CD4-positive, alpha-beta memory T cell (primary cell): ENCODE measurements at regions of chr9 and their contacts with region 1.

Region 1: DNA sequence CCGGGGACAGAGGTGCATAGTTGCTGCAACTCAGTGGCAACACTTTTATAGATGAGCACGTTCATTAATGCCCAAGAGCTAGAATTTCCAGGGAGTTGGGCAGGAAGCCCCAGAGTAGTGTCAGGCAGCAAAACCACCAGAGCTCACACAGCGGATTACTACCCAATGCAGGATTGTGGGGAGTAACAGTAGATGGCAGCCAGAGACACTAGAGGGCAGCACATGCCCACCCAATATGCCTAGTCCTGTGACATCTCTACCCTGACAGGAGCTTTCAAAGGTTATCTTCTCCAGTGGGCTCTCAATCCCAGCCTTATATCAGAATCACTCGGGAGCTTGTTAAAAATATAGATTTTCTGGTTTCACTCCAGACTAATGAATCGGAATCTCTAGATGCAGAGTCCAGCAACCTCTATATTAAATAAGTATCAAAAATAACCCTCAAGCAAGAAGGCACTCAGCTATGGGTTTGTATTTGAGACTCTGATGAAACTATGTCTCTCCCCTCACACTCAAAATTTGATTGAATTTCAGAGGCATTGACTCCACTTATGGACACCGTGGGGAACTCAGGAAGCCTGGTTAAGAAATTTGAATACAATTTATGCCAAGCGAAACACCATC is 58.4 kb upstream of the PHF24 start:
- DNase-seq: peak; percentile 73 to 78 (median 77)
- H3K4me3 ChIP-seq: no peak overlapping the region
- H3K4me3 Mint-ChIP-seq: no peak overlapping the region
- H3K27ac ChIP-seq: no peak overlapping the region
- H3K27ac Mint-ChIP-seq: no peak overlapping the region
- H3K4me1 ChIP-seq: no peaks in the 10 kb centered on the region
- H3K4me1 Mint-ChIP-seq: no peaks in the 10 kb centered on the region
- H3K27me3 ChIP-seq: no peaks in the 10 kb centered on the region
- H3K27me3 Mint-ChIP-seq: peaks cover 29 to 30% of the 10 kb centered on the region in 2 donors

Region 2: DNA sequence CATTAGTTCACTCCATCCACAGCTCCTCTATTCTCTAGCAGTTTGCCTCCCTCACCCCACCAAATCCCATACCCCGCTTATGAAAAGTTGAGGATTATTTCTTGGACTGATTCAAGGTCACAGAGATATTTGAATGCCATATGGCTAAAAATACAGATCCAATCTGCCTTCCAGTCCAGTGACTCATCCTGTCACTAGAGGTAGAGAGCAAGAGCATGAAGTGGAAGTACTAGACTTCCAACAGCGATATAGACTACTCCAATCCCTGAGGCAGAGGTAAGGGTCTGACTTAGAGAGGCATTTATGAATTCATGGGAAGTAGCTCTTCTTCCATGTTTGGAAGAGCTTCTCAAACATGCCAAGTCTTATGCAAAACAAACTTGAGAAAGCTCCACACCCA is 117.3 kb before region 1 on chr9:
- CTCF ChIA-PET with region 1: no interaction called
- POLR2A ChIA-PET with region 1: no interaction called
- intact Hi-C with region 1: no loop called
- DNase-seq: no peak
- H3K4me3 ChIP-seq: no peak overlapping the region
- H3K4me3 Mint-ChIP-seq: no peak overlapping the region
- H3K27ac ChIP-seq: no peak overlapping the region
- H3K27ac Mint-ChIP-seq: no peak overlapping the region
- H3K4me1 ChIP-seq: no peaks in the 10 kb centered on the region
- H3K4me1 Mint-ChIP-seq: no peaks in the 10 kb centered on the region
- H3K27me3 ChIP-seq: no peaks in the 10 kb centered on the region
- H3K27me3 Mint-ChIP-seq: peaks cover 13 to 16% of the 10 kb centered on the region in 2 donors

Region 3: DNA sequence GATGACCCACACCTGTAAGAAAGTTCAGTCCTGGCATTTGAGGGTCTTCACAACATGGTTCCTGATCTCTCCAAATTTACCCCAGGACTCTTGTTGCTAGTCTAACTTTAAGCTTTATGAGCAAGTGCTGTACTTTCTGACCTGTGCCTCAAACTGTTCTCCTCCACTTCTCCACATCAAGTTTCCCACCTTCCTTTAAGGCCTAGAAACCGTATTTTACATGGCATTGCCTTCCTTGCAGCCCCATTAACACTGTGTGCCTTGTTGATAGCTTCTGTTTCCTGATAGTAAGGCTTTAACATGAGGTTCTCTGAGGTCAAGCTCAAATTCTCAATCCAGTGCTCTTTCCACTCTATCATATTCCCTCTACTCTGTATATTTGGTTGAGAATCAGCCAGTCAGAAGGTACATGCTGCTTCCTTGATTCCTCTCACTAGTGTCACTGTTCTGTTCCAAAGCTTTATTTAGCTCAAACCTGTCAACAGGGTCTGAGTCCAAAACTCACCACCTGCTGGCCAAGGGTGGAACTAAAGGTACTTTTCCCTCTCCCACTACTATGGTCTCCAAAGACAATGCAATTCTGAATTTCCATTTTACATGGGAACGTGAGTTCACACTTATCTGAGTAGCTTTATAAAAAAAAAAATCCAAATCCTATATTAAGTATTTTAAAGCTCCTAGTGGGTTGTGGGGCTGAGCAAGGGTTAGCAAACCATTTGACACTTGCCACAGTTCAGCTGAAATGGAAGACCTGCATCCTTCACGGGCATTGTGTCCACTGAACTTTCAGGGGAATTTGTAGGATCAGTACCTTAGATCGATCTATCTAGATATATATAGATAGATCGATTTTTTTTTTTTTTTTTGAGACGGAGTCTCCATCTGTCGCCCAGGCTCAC is 151.7 kb after region 1 on chr9:
- CTCF ChIA-PET with region 1: interaction called, 43 read pairs
- POLR2A ChIA-PET with region 1: interaction called, 5 read pairs
- intact Hi-C with region 1: loop called (anchors 1 kb)
- DNase-seq: peak; percentile 28 to 51 (median 36)
- H3K4me3 ChIP-seq: no peak overlapping the region
- H3K4me3 Mint-ChIP-seq: no peak overlapping the region
- H3K27ac ChIP-seq: no peak overlapping the region
- H3K27ac Mint-ChIP-seq: no peak overlapping the region
- H3K4me1 ChIP-seq: no peaks in the 10 kb centered on the region
- H3K4me1 Mint-ChIP-seq: peaks cover 0 to 13% (median 5%) of the 10 kb centered on the region in 4 donors
- H3K27me3 ChIP-seq: no peaks in the 10 kb centered on the region
- H3K27me3 Mint-ChIP-seq: no peaks in the 10 kb centered on the region

Region 4: DNA sequence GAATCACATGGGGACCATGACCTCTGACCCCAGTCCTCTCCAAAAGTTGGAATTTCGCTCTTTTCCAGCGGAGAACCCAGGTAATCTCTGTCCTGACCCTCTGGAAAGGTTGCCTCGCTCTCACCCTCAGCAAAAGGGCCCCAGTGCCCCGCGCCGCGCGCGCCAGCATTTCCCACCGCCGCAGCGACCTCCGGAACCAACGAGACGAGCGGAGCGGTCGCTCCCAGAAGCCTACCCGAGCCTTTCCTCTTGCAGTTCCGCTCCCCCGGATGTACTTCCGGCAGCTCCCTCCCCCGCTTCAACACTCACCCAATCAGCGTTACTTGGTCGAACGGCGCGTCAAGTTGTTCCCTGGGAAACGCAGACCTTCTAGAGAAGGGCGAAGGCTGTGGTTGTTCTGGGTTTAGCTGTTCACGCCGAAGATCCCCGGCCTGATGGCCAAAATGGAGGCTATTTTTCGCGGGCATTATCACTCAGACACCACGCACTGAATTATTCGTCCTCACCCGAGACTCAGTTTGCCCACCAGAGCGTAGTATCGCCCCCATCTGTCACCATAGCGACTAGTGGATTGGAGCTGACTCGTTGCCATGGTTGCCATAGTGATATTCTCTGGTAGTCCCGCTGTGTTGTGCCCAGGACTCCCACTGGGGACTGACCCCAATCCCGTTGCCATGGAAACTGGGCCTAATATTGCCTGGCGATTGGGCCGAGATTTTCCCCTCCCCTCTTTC is 203.4 kb after region 1 on chr9 and contains the start of gene STOML2:
- CTCF ChIA-PET with region 1: interaction called, 10 read pairs
- POLR2A ChIA-PET with region 1: no interaction called
- intact Hi-C with region 1: no loop called
- DNase-seq: peak; percentile 91 to 96 (median 93)
- H3K4me3 ChIP-seq: peak within 1 kb of the TSS; percentile 83 to 96
- H3K4me3 Mint-ChIP-seq: peak within 1 kb of the TSS; percentile 90 to 98 (median 94)
- H3K27ac ChIP-seq: peak within 1 kb of the TSS; percentile 95
- H3K27ac Mint-ChIP-seq: peak within 1 kb of the TSS; percentile 97 to 100 (median 99)
- H3K4me1 ChIP-seq: peaks cover 23% of the 10 kb centered on the region
- H3K4me1 Mint-ChIP-seq: peaks cover 19 to 46% (median 30%) of the 10 kb centered on the region in 4 donors
- H3K27me3 ChIP-seq: no peaks in the 10 kb centered on the region
- H3K27me3 Mint-ChIP-seq: no peaks in the 10 kb centered on the region
- total RNA-seq, gene STOML2: 42.9 to 45.3 TPM

Region 5: GRCh38 chr9:35481347-35481975 is 581.8 kb after region 1 on chr9:
- CTCF ChIA-PET with region 1: interaction called, 36 read pairs
- POLR2A ChIA-PET with region 1: no interaction called
- intact Hi-C with region 1: no loop called
- DNase-seq: peak in 2 of 5 donors; percentile 17 to 23
- H3K4me3 ChIP-seq: no peak overlapping the region
- H3K4me3 Mint-ChIP-seq: no peak overlapping the region
- H3K27ac ChIP-seq: no peak overlapping the region
- H3K27ac Mint-ChIP-seq: no peak overlapping the region
- H3K4me1 ChIP-seq: no peaks in the 10 kb centered on the region
- H3K4me1 Mint-ChIP-seq: no peaks in the 10 kb centered on the region
- H3K27me3 ChIP-seq: no peaks in the 10 kb centered on the region
- H3K27me3 Mint-ChIP-seq: peaks cover 7 to 10% of the 10 kb centered on the region in 2 donors